ENCODE measurements at regions of chr11 and their contacts with region 1.

Region 1: GRCh38 chr11:96781082-96781481 is 391.3 kb downstream of the JRKL start:
- DNase-seq: no peak
- ATAC-seq: no peak
- H3K4me3 ChIP-seq: no peak overlapping the region
- H3K27ac ChIP-seq: no peak overlapping the region
- H3K4me1 ChIP-seq: no peaks in the 10 kb centered on the region
- H3K27me3 ChIP-seq: no peaks in the 10 kb centered on the region
- CTCF ChIP-seq: no peak

Region 2: DNA sequence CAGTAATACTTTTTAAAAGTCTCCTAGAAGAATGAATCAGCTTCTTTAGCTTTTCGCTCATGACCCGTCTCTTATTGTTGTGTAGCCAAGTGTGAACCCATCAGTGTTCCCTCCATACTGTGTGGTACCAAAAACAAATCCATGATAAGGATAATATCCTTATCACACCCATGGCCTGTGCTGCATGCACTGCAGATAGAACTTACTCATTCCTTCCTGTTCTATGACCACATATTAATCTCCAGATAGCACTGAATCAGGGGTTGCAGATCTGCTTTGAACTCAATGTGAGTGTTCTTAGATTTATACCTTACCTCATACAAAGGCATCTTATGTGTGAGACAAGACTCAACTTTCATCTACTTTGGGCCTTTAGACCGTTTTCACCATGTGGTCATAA is 17.8 kb before region 1 on chr11:
- intact Hi-C with region 1: no loop called
- DNase-seq: no peak
- ATAC-seq: no peak
- H3K4me3 ChIP-seq: no peak overlapping the region
- H3K27ac ChIP-seq: no peak overlapping the region
- H3K4me1 ChIP-seq: no peaks in the 10 kb centered on the region
- H3K27me3 ChIP-seq: no peaks in the 10 kb centered on the region
- CTCF ChIP-seq: no peak

Region 3: DNA sequence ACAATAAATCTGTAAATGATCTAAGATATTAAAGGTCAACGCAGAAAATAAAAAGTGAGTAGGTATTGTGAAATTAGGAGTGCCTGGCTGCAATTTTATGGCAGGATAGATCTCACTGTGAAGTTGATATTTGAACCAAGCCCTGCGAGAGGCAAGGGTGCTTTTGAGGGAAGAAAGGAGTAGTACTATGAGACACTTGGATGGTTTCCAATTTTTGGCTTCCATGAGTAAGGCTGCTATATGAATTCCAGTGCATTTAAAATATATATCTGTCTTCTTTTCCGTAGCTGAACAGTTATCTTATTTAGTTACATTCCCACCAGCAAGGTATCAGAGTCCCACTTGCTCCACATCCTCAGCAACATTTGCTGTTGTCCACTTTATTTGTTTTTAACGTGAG is 1519.7 kb after region 1 on chr11:
- intact Hi-C with region 1: loop called in 1 of 10 experiments (anchors 10 kb)
- DNase-seq: no peak
- ATAC-seq: no peak
- H3K4me3 ChIP-seq: no peak overlapping the region
- H3K27ac ChIP-seq: no peak overlapping the region
- H3K4me1 ChIP-seq: no peaks in the 10 kb centered on the region
- H3K27me3 ChIP-seq: no peaks in the 10 kb centered on the region
- CTCF ChIP-seq: no peak